ENCODE measurements at regions of chr5 and their contacts with region 1.

Region 1: DNA sequence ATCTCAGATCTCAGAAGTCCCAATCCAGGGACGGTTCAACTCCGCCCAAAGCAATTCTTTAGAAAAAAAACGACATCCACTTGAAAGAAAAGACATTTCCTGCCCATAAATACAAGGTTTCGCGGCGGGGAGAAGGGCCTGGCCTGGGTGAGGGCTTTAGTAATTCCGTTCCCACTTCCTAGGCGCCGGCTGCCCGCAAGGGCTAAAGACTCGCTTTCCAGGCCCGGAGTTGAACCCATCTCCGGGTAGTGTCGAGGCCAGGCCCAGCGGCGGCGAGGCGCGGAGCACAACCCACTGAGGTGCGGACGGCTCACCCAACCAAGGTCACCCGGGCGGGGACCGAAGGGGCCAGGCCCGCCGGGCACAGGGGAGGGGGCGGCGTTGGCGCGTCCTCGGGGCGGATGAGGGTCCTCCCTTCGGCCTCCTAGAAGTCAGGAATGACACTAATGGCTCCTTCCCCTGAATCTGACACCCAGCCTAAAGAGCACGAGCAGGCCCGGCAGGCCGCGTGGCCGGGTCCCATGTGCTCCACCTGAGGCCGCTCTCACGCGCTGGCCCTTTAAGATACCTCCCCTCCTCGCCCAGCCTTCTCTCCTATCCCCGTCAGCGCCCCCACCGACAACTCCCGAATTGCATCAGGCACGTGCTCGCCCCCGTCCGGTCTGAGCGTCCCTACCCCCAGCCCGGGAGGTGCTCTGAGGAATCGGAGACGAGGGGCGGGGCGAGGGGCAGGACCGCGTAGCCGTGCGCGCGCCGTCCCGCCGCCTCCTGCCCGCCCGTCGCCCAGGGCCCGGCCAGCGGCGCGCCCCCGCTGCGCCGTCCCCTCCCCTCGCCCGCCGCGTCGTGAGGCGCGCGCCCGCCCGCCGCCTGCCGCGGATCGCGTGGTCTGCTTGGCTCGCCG is 467 bp upstream of the LARP1 start:
- DNase-seq: peak; percentile 97 to 99 (median 99)
- ATAC-seq: peak; percentile 94
- H3K4me3 ChIP-seq: peak overlapping the region; percentile 72
- H3K4me3 Mint-ChIP-seq: peak overlapping the region; percentile 88 to 98 (median 92)
- H3K27ac ChIP-seq: peak overlapping the region; percentile 96
- H3K27ac Mint-ChIP-seq: peak overlapping the region; percentile 92 to 98 (median 98)
- H3K4me1 ChIP-seq: peaks cover 30 to 32% of the 10 kb centered on the region in 2 donors
- H3K4me1 Mint-ChIP-seq: peaks cover 27 to 45% (median 33%) of the 10 kb centered on the region in 7 donors
- H3K27me3 ChIP-seq: no peaks in the 10 kb centered on the region
- H3K27me3 Mint-ChIP-seq: no peaks in the 10 kb centered on the region

Region 2: DNA sequence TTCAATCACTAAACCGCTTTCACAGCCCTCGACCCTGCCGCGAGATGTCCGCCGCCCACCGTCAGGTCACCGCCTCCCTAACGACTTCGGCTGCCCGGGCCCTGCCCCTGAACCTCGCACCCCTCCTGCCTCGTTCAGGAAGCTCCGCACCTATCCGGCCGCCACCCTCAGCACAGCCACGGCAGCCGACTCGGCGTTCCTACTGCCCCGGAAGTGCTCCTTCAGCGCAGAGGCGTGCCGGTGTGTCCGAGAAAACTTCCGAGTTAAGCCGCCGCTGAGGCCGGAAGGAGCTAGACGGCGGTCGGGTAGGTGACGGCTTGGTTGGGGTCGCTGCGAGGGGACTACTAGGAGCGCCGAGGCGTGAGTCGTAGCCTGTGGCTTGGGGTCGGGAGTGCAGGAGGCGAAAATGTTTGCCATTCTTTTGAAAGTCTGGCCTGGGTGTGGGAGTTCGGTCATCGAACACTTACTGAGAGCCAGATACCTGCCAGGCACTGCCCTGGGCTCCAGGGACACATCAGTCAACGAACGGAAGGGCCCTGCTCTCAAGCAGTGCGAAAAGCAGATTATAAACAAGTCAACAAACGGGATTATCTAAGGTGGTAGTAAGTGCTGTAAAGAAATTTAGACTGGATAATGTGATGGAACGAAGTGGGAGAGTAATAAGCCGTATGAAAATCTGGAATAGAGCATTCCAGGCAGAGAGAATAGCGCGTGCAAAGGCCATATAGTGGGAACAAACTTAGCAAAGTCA is 715.8 kb before region 1 on chr5 and contains the starts of genes FAM114A2 and MFAP3:
- CTCF ChIA-PET with region 1: no interaction called
- POLR2A ChIA-PET with region 1: interaction called, 3 read pairs
- intact Hi-C with region 1: loop called (anchors 1 to 2 kb)
- DNase-seq: peak; percentile 74 to 87 (median 84)
- ATAC-seq: peak; percentile 98
- H3K4me3 ChIP-seq: peak within 1 kb of the TSS; percentile 93
- H3K4me3 Mint-ChIP-seq: peak within 1 kb of the TSS; percentile 91 to 99 (median 98)
- H3K27ac ChIP-seq: peak within 1 kb of the TSS; percentile 80
- H3K27ac Mint-ChIP-seq: peak within 1 kb of the TSS; percentile 96 to 99 (median 97)
- H3K4me1 ChIP-seq: peaks cover 11 to 21% of the 10 kb centered on the region in 2 donors
- H3K4me1 Mint-ChIP-seq: peaks cover 37 to 78% (median 76%) of the 10 kb centered on the region in 7 donors
- H3K27me3 ChIP-seq: no peaks in the 10 kb centered on the region
- H3K27me3 Mint-ChIP-seq: no peaks in the 10 kb centered on the region
- total RNA-seq, gene FAM114A2: 26.2 to 53.1 (median 37.1) TPM
- total RNA-seq, gene MFAP3: 11.1 to 30.6 (median 28.1) TPM

Region 3: GRCh38 chr5:154394307-154394706 is 360.4 kb before region 1 on chr5:
- CTCF ChIA-PET with region 1: no interaction called
- POLR2A ChIA-PET with region 1: no interaction called
- intact Hi-C with region 1: no loop called
- DNase-seq: no peak
- ATAC-seq: no peak
- H3K4me3 ChIP-seq: no peak overlapping the region
- H3K4me3 Mint-ChIP-seq: no peak overlapping the region
- H3K27ac ChIP-seq: no peak overlapping the region
- H3K27ac Mint-ChIP-seq: peak overlapping the region in 2 of 9 donors; percentile 40 to 84
- H3K4me1 ChIP-seq: no peaks in the 10 kb centered on the region
- H3K4me1 Mint-ChIP-seq: peaks cover 0 to 7% (median 0%) of the 10 kb centered on the region in 7 donors
- H3K27me3 ChIP-seq: no peaks in the 10 kb centered on the region
- H3K27me3 Mint-ChIP-seq: no peaks in the 10 kb centered on the region

Region 4: GRCh38 chr5:154445422-154446182 is 309.1 kb before region 1 on chr5 and contains the start of gene SAP30L:
- CTCF ChIA-PET with region 1: no interaction called
- POLR2A ChIA-PET with region 1: no interaction called
- intact Hi-C with region 1: loop called (anchors 1 kb)
- DNase-seq: peak; percentile 92 to 99 (median 97)
- ATAC-seq: peak; percentile 97
- H3K4me3 ChIP-seq: peak within 1 kb of the TSS; percentile 90
- H3K4me3 Mint-ChIP-seq: peak within 1 kb of the TSS; percentile 94 to 100 (median 99)
- H3K27ac ChIP-seq: peak within 1 kb of the TSS; percentile 83
- H3K27ac Mint-ChIP-seq: peak within 1 kb of the TSS; percentile 88 to 98 (median 95)
- H3K4me1 ChIP-seq: peaks cover 16 to 35% of the 10 kb centered on the region in 2 donors
- H3K4me1 Mint-ChIP-seq: peaks cover 32 to 74% (median 61%) of the 10 kb centered on the region in 7 donors
- H3K27me3 ChIP-seq: no peaks in the 10 kb centered on the region
- H3K27me3 Mint-ChIP-seq: no peaks in the 10 kb centered on the region
- total RNA-seq, gene SAP30L: 31.1 to 45.7 (median 35.9) TPM

Region 5: GRCh38 chr5:154683101-154683880 is 71.4 kb before region 1 on chr5:
- CTCF ChIA-PET with region 1: no interaction called
- POLR2A ChIA-PET with region 1: no interaction called
- intact Hi-C with region 1: loop called (anchors 1 to 2 kb)
- DNase-seq: no peak
- ATAC-seq: peak; percentile 26
- H3K4me3 ChIP-seq: peak overlapping the region; percentile 48
- H3K4me3 Mint-ChIP-seq: peak overlapping the region; percentile 32 to 82 (median 76)
- H3K27ac ChIP-seq: no peak overlapping the region
- H3K27ac Mint-ChIP-seq: peak overlapping the region in 2 of 9 donors; percentile 17 to 53
- H3K4me1 ChIP-seq: peaks cover 0 to 3% of the 10 kb centered on the region in 2 donors
- H3K4me1 Mint-ChIP-seq: peaks cover 0 to 9% (median 6%) of the 10 kb centered on the region in 7 donors
- H3K27me3 ChIP-seq: peaks cover 0 to 2% of the 10 kb centered on the region in 2 donors
- H3K27me3 Mint-ChIP-seq: peaks cover 0 to 34% (median 3%) of the 10 kb centered on the region in 5 donors

Region 6: DNA sequence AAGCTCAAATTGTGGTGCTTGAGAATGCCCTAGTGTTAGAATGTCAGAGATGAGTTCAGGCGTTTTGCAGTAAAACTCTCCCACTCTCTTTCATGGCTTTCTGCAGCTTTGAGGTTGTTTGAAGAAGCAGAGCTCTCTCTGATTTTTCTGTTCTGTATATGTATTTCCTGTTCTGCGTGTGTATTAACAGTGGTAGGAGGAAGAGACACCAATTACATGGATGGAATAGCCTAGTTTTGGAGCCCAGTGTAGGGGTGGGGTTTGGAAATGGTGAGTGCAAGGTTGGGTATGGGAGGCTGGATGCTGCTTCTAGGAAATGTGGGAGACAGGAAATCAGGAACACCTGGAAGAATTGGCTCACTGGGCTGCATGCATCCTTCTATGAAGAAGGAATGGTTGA is 12.9 kb after region 1 on chr5:
- CTCF ChIA-PET with region 1: no interaction called
- POLR2A ChIA-PET with region 1: interaction called, 14 read pairs
- intact Hi-C with region 1: loop called in 1 of 2 experiments (anchors 1 kb)
- DNase-seq: peak in 6 of 9 donors; percentile 21 to 51 (median 42)
- ATAC-seq: peak; percentile 73
- H3K4me3 ChIP-seq: no peak overlapping the region
- H3K4me3 Mint-ChIP-seq: peak overlapping the region; percentile 4 to 82 (median 67)
- H3K27ac ChIP-seq: peak overlapping the region; percentile 25
- H3K27ac Mint-ChIP-seq: peak overlapping the region; percentile 4 to 78 (median 64)
- H3K4me1 ChIP-seq: peaks cover 38 to 77% of the 10 kb centered on the region in 2 donors
- H3K4me1 Mint-ChIP-seq: peaks cover 55 to 86% (median 75%) of the 10 kb centered on the region in 7 donors
- H3K27me3 ChIP-seq: no peaks in the 10 kb centered on the region
- H3K27me3 Mint-ChIP-seq: no peaks in the 10 kb centered on the region

Region 7: GRCh38 chr5:154811653-154812365 is 57.1 kb after region 1 on chr5:
- CTCF ChIA-PET with region 1: no interaction called
- POLR2A ChIA-PET with region 1: no interaction called
- intact Hi-C with region 1: loop called (anchors 1 kb)
- DNase-seq: peak; percentile 30 to 68 (median 58)
- ATAC-seq: peak; percentile 88
- H3K4me3 ChIP-seq: no peak overlapping the region
- H3K4me3 Mint-ChIP-seq: peak overlapping the region in 4 of 10 donors; percentile 10 to 47 (median 23)
- H3K27ac ChIP-seq: no peak overlapping the region
- H3K27ac Mint-ChIP-seq: peak overlapping the region; percentile 1 to 82 (median 55)
- H3K4me1 ChIP-seq: peaks cover 15 to 18% of the 10 kb centered on the region in 2 donors
- H3K4me1 Mint-ChIP-seq: peaks cover 21 to 46% (median 36%) of the 10 kb centered on the region in 7 donors
- H3K27me3 ChIP-seq: no peaks in the 10 kb centered on the region
- H3K27me3 Mint-ChIP-seq: no peaks in the 10 kb centered on the region

Region 8: GRCh38 chr5:155154973-155155372 is 400.3 kb after region 1 on chr5:
- CTCF ChIA-PET with region 1: no interaction called
- POLR2A ChIA-PET with region 1: no interaction called
- intact Hi-C with region 1: no loop called
- DNase-seq: no peak
- ATAC-seq: no peak
- H3K4me3 ChIP-seq: no peak overlapping the region
- H3K4me3 Mint-ChIP-seq: no peak overlapping the region
- H3K27ac ChIP-seq: no peak overlapping the region
- H3K27ac Mint-ChIP-seq: no peak overlapping the region
- H3K4me1 ChIP-seq: no peaks in the 10 kb centered on the region
- H3K4me1 Mint-ChIP-seq: peaks cover 0 to 5% (median 0%) of the 10 kb centered on the region in 7 donors
- H3K27me3 ChIP-seq: no peaks in the 10 kb centered on the region
- H3K27me3 Mint-ChIP-seq: peaks cover 0 to 16% (median 4%) of the 10 kb centered on the region in 5 donors